ENCODE measurements at regions of chr17 and their contacts with region 1.

Region 1: DNA sequence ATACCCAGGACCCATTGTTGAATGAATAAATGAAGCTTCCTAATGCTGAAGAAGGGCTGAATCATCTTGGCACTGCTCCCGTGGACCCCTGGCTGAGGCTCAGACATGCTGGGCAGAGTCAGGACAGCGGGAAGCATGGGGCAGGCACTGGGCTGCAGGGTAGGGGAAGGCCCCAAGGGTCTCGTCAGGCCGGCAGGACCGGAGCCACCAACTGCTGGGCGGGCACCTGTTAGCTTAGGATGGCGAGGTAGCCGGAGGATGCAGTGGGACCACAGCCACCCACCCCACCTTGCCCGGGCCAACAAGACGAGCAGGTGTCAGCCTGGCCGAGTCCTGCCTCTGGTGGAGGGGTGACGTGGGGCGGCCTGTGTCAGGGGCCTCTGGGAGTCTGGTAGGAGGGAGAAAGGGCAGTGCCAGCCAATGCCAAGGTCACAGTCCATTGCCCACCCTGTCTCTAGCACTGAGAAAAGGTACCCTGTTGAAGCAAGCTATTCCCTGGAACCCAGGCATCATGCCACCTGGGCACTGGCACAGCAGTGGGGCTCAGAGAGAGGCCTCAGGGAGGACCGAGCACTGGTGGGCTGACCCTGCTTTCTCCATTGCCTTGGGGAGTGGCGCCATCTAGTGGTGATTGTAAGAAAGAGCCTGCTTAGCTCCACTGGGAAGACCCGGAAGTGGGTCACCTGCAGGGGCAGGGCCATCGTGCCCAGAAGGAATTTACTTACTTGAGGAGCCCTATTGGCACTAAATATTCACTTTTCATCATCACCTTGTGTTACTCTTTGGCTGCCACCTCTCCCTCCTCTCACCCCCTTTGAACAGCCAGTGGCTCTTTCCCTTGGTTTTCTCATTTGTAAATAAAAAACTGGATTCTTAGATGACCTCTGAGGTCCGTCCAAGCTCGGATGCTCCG is 3.0 kb upstream of the DLX3 start:
- DNase-seq: peak; percentile 91

Region 2: GRCh38 chr17:49857938-49858337 is 140.1 kb before region 1 on chr17:
- CTCF ChIA-PET with region 1: interaction called, 10 read pairs
- POLR2A ChIA-PET with region 1: no interaction called
- DNase-seq: no peak

Region 3: GRCh38 chr17:49875685-49876084 is 122.4 kb before region 1 on chr17:
- CTCF ChIA-PET with region 1: interaction called, 10 read pairs
- POLR2A ChIA-PET with region 1: interaction called, 3 read pairs
- DNase-seq: no peak

Region 4: DNA sequence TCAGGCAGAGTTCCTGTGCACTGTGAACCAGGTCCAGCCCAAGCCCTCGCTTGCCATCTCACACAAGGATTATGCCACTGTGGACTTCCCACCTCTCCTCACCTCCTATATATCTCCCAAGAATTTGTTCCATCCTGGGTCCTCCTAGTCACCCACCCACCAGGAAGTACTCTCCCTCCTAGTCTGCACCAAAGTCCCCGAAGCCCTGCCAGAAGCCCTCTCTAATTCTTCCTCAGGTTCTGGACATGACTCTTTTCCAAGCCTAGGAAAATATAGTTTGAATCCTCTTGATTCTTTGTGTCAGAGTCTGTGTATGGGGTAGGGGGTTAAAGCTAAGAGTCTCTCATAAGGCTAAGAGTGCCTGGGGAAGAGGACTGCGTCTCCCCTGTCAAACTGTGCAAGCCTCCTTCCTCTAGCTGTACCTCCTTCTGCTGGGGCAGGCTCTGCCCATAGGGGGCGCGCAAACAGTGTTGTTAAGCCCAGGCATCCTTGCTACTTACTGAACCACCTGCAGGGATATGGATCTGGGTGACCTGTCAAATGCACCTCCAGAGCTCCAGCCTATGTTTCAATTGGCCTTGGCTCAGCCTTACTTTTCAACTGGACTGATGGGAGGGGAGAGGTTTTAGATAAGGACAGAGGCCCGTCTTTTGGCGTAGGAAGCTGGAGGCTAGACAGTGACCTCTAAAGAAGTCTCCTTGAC is 45.7 kb before region 1 on chr17:
- CTCF ChIA-PET with region 1: interaction called, 72 read pairs
- POLR2A ChIA-PET with region 1: interaction called, 4 read pairs
- DNase-seq: peak; percentile 91

Region 5: GRCh38 chr17:49959183-49959935 is 38.7 kb before region 1 on chr17:
- CTCF ChIA-PET with region 1: interaction called, 24 read pairs
- POLR2A ChIA-PET with region 1: no interaction called
- DNase-seq: no peak

Region 6: DNA sequence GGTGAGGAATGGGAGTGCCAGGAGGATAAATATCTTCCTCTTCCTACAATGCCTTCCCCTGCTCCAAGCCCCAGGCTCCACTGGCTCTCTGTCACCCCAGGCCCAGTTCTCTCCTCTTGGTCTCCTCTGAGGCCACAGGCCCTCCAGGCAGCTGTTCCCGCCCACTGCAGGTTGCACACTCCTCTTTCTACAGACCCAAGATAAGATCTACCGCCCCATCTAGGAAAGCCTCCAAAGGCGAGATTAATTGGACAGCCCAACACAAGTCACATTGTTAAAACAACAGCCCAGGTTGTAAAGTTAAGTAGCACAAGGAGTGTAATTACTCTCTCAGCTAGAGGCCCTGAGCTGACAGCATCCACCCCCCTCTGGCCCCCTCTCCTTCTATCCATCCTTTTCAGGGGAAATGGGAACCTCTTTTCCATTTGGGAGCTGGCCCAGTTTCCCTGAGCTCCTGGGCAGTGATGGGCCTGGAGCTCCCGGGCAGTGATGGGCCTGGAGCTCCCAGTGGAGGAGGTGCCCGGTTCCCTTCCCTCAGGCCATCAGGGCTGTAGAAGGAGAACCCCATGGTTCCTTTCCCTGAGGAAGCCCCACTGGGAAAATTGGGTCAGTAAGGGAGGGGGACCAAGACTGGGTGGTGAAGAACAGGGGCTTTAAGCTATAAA is 21.8 kb before region 1 on chr17:
- CTCF ChIA-PET with region 1: interaction called, 14 read pairs
- POLR2A ChIA-PET with region 1: interaction called, 4 read pairs
- DNase-seq: peak; percentile 73

Region 7: GRCh38 chr17:50037321-50038071 is 39.4 kb after region 1 on chr17:
- CTCF ChIA-PET with region 1: no interaction called
- POLR2A ChIA-PET with region 1: no interaction called
- DNase-seq: no peak

Measured in HEK293T (cell line).